ENCODE measurements at regions of chr22 and their contacts with region 1.

Region 1: DNA sequence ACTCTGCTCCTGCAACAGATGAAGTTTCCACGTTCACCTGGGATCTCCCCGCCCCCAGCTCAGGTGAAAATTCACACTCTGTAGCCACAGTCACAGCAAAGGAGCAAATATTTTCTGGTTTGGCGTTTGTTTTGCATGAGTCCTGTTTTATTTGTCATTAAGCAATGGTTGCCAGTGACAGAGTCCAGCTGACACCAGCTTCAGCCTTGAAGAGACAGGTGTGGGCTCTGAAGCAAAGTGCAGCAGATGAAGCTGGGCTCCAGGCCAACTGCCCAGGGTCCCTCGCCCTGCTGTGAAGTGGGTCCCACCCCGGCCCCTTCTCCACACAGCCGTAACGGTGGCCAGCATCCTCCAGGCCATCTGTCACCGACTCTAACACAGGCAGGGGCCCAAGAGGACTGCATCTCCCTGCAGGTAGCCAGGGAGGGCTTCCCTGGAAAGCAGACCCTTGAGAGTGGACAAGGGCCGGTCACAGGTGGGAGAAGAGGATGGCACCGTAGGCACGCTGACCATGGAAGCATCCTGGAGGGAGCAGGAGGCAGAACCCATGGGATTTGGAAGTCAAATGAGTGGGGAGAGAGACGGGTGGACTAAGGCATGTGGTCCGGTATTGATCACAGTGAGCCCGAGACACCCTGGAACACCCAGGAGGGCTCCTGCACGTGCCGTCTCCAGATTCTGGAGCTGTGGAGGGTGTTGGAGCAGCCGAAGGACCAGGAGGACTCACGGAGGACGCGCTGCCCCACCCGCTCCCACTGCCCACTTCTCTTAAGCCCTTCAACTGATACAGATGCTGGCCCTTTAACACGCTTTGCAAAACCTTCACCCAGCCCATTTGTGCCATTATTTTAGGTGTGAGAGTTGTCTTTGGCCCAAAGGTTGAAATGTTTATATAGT is 294.6 kb downstream of the BRD1 start:
- DNase-seq: peak in 1 of 6 donors; percentile 14
- ATAC-seq: no peak
- H3K4me3 ChIP-seq: no peak overlapping the region
- H3K27ac ChIP-seq: no peak overlapping the region
- H3K4me1 ChIP-seq: no peaks in the 10 kb centered on the region
- H3K27me3 ChIP-seq: peaks cover 0 to 4% (median 0%) of the 10 kb centered on the region in 4 donors
- CTCF ChIP-seq: no peak

Region 2: DNA sequence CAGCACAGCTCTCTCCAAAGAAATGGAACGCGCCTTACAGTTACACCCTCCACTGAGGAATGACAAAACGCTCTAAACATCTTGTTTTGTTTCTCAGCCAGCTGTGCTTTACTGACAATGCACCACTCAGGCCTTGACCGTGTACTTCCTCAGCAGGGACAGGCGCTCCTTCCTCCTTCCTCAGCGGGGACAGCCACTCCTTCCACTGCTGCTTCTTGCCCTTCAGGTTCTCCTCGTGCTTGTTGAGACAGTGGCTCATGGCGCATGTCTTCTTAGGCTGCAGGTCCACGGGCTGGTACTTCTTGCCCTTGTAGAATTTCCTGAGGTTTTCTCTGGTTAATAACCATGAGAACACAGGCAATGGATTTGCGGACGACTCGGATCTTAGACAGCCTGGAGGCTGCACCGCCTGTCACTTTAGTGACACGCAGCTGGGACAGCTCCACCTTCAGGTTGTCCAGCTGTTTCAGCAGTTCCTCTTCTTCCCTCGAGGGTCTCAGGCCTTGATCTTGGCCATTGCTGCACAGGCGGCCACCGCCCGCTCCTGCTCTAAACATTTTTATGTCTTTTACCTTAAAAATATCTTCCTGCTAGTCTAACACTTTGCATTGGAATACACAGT is 319.3 kb before region 1 on chr22:
- intact Hi-C with region 1: no loop called
- DNase-seq: peak in 2 of 6 donors; percentile 7 to 21
- ATAC-seq: no peak
- H3K4me3 ChIP-seq: no peak overlapping the region
- H3K27ac ChIP-seq: no peak overlapping the region
- H3K4me1 ChIP-seq: no peaks in the 10 kb centered on the region
- H3K27me3 ChIP-seq: no peaks in the 10 kb centered on the region
- CTCF ChIP-seq: no peak

Region 3: GRCh38 chr22:49497259-49497658 is 35.9 kb before region 1 on chr22:
- intact Hi-C with region 1: no loop called
- DNase-seq: no peak
- ATAC-seq: no peak
- H3K4me3 ChIP-seq: no peak overlapping the region
- H3K27ac ChIP-seq: no peak overlapping the region
- H3K4me1 ChIP-seq: no peaks in the 10 kb centered on the region
- H3K27me3 ChIP-seq: no peaks in the 10 kb centered on the region
- CTCF ChIP-seq: no peak

Region 4: DNA sequence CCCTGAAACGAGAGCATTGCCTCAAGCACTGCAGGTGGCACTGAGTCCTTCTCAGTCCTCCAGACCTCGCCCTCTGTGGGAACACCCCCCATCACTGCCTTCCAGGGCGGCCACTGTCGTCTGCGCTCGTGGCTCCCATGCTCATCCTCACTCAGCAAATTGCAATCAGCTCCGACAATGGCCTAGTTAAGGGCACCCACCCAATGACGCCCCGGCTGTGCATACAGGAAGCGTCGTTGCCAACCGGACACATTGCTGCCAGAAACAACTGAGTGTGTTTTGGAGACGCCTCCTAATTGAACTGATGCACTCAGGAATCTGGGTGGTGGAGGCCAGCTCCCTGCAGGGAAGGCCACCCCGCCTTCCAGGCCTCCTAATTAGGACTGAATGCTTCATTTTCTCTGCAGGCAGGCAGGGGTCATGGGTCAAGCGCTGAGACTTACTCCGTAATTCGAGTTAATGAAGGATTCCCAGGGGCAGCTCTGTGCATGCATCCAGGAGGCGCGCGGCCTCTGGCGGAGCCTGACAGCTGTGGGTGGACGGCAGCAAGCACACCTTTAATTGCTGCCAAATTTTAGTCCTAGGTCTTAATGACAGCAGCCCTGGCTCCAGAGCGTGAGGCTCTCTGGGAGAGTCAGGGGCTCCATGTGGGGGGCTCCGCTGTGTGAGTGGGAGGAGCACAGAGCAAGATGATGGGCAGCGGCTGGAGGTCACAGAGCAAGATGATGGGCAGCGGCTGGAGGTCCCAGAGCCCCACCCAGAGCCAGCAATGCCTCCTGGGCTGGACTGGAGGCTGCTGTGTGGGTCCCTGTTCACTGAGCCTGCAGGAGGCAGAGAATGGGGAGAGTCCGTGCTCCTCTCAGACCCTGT is 95.5 kb after region 1 on chr22:
- intact Hi-C with region 1: loop called in 1 of 3 experiments (anchors 10 kb)
- DNase-seq: peak in 1 of 6 donors; percentile 36
- ATAC-seq: no peak
- H3K4me3 ChIP-seq: no peak overlapping the region
- H3K27ac ChIP-seq: no peak overlapping the region
- H3K4me1 ChIP-seq: no peaks in the 10 kb centered on the region
- H3K27me3 ChIP-seq: no peaks in the 10 kb centered on the region
- CTCF ChIP-seq: no peak